Activated CD4-positive, alpha-beta T cell treated with anti-CD3 and anti-CD28 coated beads for 36 hours (primary cell): ENCODE measurements at regions of chr2 and their contacts with region 1.

Region 1: GRCh38 chr2:219073413-219074129 is 12.8 kb upstream of the IHH start:
- DNase-seq: peak; percentile 41
- ATAC-seq: no peak
- H3K4me3 Mint-ChIP-seq: no peak overlapping the region
- H3K27ac Mint-ChIP-seq: no peak overlapping the region
- H3K4me1 Mint-ChIP-seq: no peaks in the 10 kb centered on the region
- H3K27me3 Mint-ChIP-seq: no peaks in the 10 kb centered on the region

Region 2: GRCh38 chr2:219087361-219087760 is 13.8 kb after region 1 on chr2:
- CTCF ChIA-PET with region 1: interaction called, 20 read pairs
- POLR2A ChIA-PET with region 1: interaction called, 4 read pairs
- intact Hi-C with region 1: no loop called
- DNase-seq: no peak
- ATAC-seq: no peak
- H3K4me3 Mint-ChIP-seq: no peak overlapping the region
- H3K27ac Mint-ChIP-seq: no peak overlapping the region
- H3K4me1 Mint-ChIP-seq: peaks cover 9% of the 10 kb centered on the region
- H3K27me3 Mint-ChIP-seq: no peaks in the 10 kb centered on the region

Region 3: GRCh38 chr2:219104107-219105035 is 30.8 kb after region 1 on chr2:
- CTCF ChIA-PET with region 1: interaction called, 47 read pairs
- POLR2A ChIA-PET with region 1: no interaction called
- intact Hi-C with region 1: no loop called
- DNase-seq: peak; percentile 36
- ATAC-seq: peak; percentile 80
- H3K4me3 Mint-ChIP-seq: no peak overlapping the region
- H3K27ac Mint-ChIP-seq: peak overlapping the region; percentile 44
- H3K4me1 Mint-ChIP-seq: peaks cover 33% of the 10 kb centered on the region
- H3K27me3 Mint-ChIP-seq: no peaks in the 10 kb centered on the region

Region 4: GRCh38 chr2:219119422-219120043 is 46.0 kb after region 1 on chr2:
- CTCF ChIA-PET with region 1: interaction called, 154 read pairs
- POLR2A ChIA-PET with region 1: no interaction called
- intact Hi-C with region 1: loop called (anchors 1 kb)
- DNase-seq: peak; percentile 82
- ATAC-seq: peak; percentile 72
- H3K4me3 Mint-ChIP-seq: no peak overlapping the region
- H3K27ac Mint-ChIP-seq: no peak overlapping the region
- H3K4me1 Mint-ChIP-seq: peaks cover 6% of the 10 kb centered on the region
- H3K27me3 Mint-ChIP-seq: no peaks in the 10 kb centered on the region

Region 5: GRCh38 chr2:219149667-219150066 is 76.1 kb after region 1 on chr2:
- CTCF ChIA-PET with region 1: interaction called, 8 read pairs
- POLR2A ChIA-PET with region 1: no interaction called
- intact Hi-C with region 1: loop called in 1 of 2 experiments (anchors 5 kb)
- DNase-seq: no peak
- ATAC-seq: no peak
- H3K4me3 Mint-ChIP-seq: no peak overlapping the region
- H3K27ac Mint-ChIP-seq: no peak overlapping the region
- H3K4me1 Mint-ChIP-seq: peaks cover 1% of the 10 kb centered on the region
- H3K27me3 Mint-ChIP-seq: no peaks in the 10 kb centered on the region